Heart right ventricle (tissue), 16 donors: ENCODE measurements at regions of chr4 and their contacts with region 1.

Region 1: GRCh38 chr4:121072224-121073003 is at the start of gene NDNF:
- DNase-seq: peak; percentile 44 to 46
- ATAC-seq: peak; percentile 64 to 86 (median 72)
- H3K4me3 ChIP-seq: peak within 1 kb of the TSS; percentile 47 to 72 (median 62)
- H3K27ac ChIP-seq: peak within 1 kb of the TSS; percentile 23 to 86 (median 74)
- H3K4me1 ChIP-seq: peaks cover 0 to 25% (median 18%) of the 10 kb centered on the region in 9 donors
- H3K27me3 ChIP-seq: peaks cover 0 to 83% (median 13%) of the 10 kb centered on the region in 7 donors
- CTCF ChIP-seq: no peak
- total RNA-seq, gene NDNF: 3.4 to 17.9 (median 7.3) TPM

Region 2: GRCh38 chr4:119833611-119834010 is 1238.8 kb before region 1 on chr4:
- intact Hi-C with region 1: no loop called
- DNase-seq: no peak
- ATAC-seq: peak in 7 of 8 donors; percentile 48 to 77 (median 58)
- H3K4me3 ChIP-seq: no peak overlapping the region
- H3K27ac ChIP-seq: peak overlapping the region in 3 of 10 donors; percentile 11 to 72 (median 24)
- H3K4me1 ChIP-seq: peaks cover 0 to 11% (median 0%) of the 10 kb centered on the region in 9 donors
- H3K27me3 ChIP-seq: no peaks in the 10 kb centered on the region
- CTCF ChIP-seq: no peak

Region 3: GRCh38 chr4:121034015-121034414 is 38.4 kb before region 1 on chr4:
- intact Hi-C with region 1: loop called in 2 of 10 experiments (anchors 1 to 5 kb)
- DNase-seq: no peak
- ATAC-seq: no peak
- H3K4me3 ChIP-seq: no peak overlapping the region
- H3K27ac ChIP-seq: no peak overlapping the region
- H3K4me1 ChIP-seq: no peaks in the 10 kb centered on the region
- H3K27me3 ChIP-seq: no peaks in the 10 kb centered on the region
- CTCF ChIP-seq: no peak